Left lung (tissue), 14 donors: ENCODE measurements at regions of chr18 and their contacts with region 1.

Region 1: DNA sequence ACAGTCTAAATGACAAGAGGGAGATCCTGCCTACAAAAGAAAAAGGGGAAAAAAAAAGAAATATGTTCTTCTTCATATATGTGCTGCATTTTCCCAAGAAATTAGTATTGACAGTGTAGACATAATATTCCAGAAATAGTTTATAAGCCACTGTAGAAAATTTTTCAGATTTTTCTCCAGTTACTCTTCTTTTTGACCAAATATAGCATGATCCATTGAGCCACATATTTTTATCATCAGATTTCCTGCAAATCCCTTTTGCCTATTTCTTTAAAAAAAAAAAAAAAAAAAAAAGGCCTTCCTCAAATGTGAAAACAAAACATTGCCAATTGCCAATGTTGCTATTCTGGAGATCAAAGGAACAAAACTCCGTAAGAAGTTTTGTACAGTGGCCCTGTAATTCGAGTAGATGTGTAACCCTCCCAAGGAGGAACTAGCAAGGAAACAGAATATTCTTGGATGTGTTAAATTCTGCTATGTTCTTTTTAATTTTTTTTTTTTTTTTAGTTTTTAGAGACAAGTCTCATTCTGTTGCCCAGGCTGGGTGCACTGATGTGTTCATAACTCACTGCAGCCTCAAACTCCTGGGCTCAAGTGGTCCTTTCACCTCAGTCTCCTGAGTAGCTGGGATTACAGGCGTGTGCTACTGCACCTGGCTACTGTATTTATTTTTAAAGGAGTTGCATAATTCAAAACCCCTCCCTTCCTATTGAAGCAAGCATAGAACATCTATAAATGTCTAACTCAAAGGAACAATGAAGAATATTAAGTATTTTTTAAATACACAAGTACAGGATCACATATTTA is 12.5 kb upstream of the CABYR start:
- DNase-seq: peak in 1 of 4 donors; percentile 15
- ATAC-seq: peak; percentile 81
- H3K4me3 ChIP-seq: no peak overlapping the region
- H3K27ac ChIP-seq: no peak overlapping the region
- H3K4me1 ChIP-seq: no peaks in the 10 kb centered on the region
- H3K27me3 ChIP-seq: no peaks in the 10 kb centered on the region
- CTCF ChIP-seq: no peak

Region 2: GRCh38 chr18:23619388-23619881 is 506.9 kb before region 1 on chr18:
- intact Hi-C with region 1: loop called in 1 of 2 experiments (anchors 10 kb)
- DNase-seq: peak; percentile 25 to 85 (median 41)
- ATAC-seq: peak; percentile 59
- H3K4me3 ChIP-seq: peak overlapping the region; percentile 33 to 39
- H3K27ac ChIP-seq: peak overlapping the region in 1 of 2 donors; percentile 5
- H3K4me1 ChIP-seq: peaks cover 8 to 21% of the 10 kb centered on the region in 2 donors
- H3K27me3 ChIP-seq: peaks cover 0 to 38% of the 10 kb centered on the region in 2 donors
- CTCF ChIP-seq: no peak

Region 3: GRCh38 chr18:23967321-23968089 is 158.9 kb before region 1 on chr18:
- intact Hi-C with region 1: loop called in 1 of 2 experiments (anchors 10 kb)
- DNase-seq: no peak
- ATAC-seq: no peak
- H3K4me3 ChIP-seq: no peak overlapping the region
- H3K27ac ChIP-seq: no peak overlapping the region
- H3K4me1 ChIP-seq: peaks cover 0 to 5% of the 10 kb centered on the region in 2 donors
- H3K27me3 ChIP-seq: no peaks in the 10 kb centered on the region
- CTCF ChIP-seq: no peak

Region 4: DNA sequence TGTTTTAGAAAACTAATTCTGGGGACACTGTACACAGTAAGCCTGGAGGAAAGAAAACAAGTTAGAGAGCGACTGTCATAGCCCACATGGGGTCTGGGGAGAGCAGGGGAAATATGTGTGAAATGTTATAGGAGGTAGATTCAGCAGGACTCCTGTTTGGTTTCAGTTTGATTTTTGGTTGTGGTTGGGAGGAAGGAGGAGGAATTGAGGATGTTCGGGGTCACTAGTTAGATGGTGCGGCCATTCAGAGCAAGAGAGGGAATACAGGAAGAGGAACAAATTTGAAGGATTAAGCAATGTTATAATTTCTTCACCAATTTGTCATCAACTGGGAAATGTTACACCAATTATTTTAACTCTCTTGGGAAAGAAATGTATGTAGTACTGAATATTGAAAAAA is 86.7 kb before region 1 on chr18:
- intact Hi-C with region 1: no loop called
- DNase-seq: no peak
- ATAC-seq: no peak
- H3K4me3 ChIP-seq: no peak overlapping the region
- H3K27ac ChIP-seq: no peak overlapping the region
- H3K4me1 ChIP-seq: peaks cover 0 to 30% of the 10 kb centered on the region in 2 donors
- H3K27me3 ChIP-seq: no peaks in the 10 kb centered on the region
- CTCF ChIP-seq: no peak